K562 (cell line): ENCODE measurements at regions of chr21 and their contacts with region 1.

Region 1: DNA sequence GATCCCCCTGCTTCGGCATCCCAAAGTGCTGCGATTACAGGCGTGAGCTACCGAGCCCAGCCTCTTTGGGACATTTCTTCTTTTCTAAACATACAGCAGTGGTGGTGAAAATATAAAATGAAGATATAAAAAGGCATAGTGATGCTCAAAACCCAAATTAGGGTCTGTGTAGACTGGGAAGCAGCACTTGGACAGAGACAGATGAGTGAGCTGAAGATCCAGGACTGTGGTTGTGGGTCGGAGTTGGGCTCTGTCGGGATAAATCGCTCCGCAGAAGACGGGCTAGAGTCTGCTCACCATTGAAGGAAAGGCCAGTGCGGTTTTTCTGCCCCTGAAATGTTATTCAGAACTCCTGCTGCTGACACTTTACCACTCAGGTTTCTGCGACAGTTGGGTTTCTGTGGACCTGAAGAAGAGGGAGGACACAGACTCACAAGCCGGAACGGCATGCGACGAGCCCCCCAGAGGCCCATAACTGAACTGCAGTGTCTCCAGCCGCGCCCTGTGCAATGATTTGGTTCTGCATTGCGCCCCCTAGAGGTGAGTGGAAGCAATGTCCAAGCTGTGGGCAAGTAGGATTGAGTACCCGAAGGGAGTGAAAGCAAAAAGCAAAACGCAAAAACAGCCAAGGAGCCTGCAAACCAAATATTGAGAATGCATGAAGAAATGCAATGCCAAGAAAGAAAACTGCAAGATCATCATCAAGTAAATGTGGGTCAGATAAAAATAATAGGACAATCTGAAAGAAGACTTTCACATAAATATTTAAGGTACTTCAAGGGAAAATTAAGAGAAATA is 66.6 kb downstream of the GABPA start:
- DNase-seq: peak; percentile 87 to 95 (median 92)
- ATAC-seq: peak; percentile 100
- H3K4me3 ChIP-seq: no peak overlapping the region
- H3K27ac ChIP-seq: no peak overlapping the region
- H3K4me1 ChIP-seq: no peaks in the 10 kb centered on the region; a peak in 1 of 5 replicates
- H3K27me3 ChIP-seq: peaks cover 7 to 14% of the 10 kb centered on the region in 2 experiments; a peak in 3 of 5 replicates
- CTCF ChIP-seq: peak; percentile 100
- EP300 ChIP-seq: no peak
- POLR2A ChIP-seq: no peak
- RAD21 ChIP-seq: peak; percentile 44 to 85; a peak in 3 of 4 replicates

Region 2: GRCh38 chr21:25708467-25709065 is 92.8 kb before region 1 on chr21:
- CTCF ChIA-PET with region 1: interaction called, 5 read pairs
- POLR2A ChIA-PET with region 1: no interaction called
- in situ Hi-C with region 1: no loop called
- intact Hi-C with region 1: loop called (anchors 1 kb)
- DNase-seq: peak; percentile 49 to 60 (median 57)
- ATAC-seq: no peak
- H3K4me3 ChIP-seq: no peak overlapping the region
- H3K27ac ChIP-seq: no peak overlapping the region
- H3K4me1 ChIP-seq: no peaks in the 10 kb centered on the region; a peak in 1 of 5 replicates
- H3K27me3 ChIP-seq: no peaks in the 10 kb centered on the region
- CTCF ChIP-seq: peak; percentile 37 to 77 (median 73); a peak in 4 of 6 replicates
- EP300 ChIP-seq: no peak
- POLR2A ChIP-seq: no peak
- RAD21 ChIP-seq: peak; percentile 15 to 58; a peak in 2 of 4 replicates

Region 3: DNA sequence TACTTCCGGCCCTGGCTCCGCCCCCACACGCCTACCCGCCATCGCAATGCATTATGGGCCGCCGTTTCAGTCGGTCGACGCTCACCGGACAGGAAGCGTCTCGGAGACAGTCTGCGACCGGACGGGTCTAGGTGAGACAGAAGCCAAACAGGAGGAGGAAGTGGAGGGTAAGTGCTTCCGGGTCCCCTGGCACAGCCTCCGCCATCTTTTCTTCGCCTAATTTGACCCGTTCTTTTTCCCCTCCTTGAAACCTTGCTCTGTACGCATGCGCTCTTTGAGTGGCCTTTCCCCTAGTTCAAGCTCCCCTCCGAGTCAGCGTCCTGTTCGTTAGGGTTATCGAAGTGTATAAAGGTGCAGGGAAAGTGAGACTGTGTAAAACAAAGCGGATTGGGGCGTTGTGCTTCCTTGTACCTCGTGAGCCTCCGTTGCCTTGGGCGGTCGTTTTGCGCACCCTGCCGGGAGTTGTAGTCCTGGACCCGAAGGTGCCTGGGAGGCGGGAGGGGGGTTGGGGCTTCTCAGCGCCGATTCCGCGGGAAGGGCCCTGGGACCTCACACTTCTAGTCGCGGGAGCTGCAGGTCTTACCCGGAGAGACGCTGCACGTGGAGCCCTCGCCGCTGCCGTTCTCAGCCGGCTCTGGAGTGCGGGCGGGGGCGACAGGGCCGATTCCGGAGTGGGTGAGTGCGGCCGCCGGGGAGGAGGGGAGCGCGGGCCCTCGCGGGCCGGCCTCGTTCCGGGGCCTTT is 66.3 kb before region 1 on chr21 and contains the starts of genes ATP5PF and GABPA:
- CTCF ChIA-PET with region 1: no interaction called
- POLR2A ChIA-PET with region 1: interaction called, 4 read pairs
- in situ Hi-C with region 1: no loop called
- intact Hi-C with region 1: loop called (anchors 2 kb)
- DNase-seq: peak; percentile 89 to 99 (median 91)
- ATAC-seq: peak; percentile 88
- H3K4me3 ChIP-seq: peak within 1 kb of the TSS; percentile 93
- H3K27ac ChIP-seq: peak within 1 kb of the TSS; percentile 98
- H3K4me1 ChIP-seq: peaks cover 7 to 21% of the 10 kb centered on the region in 2 experiments; a peak in 4 of 5 replicates
- H3K27me3 ChIP-seq: no peaks in the 10 kb centered on the region; a peak in 1 of 5 replicates
- CTCF ChIP-seq: peak in 1 of 3 experiments; percentile 3; a peak in 2 of 6 replicates
- EP300 ChIP-seq: peak; percentile 69
- POLR2A ChIP-seq: peak; percentile 85
- RAD21 ChIP-seq: no peak
- polyA plus RNA-seq, gene ATP5PF: 2,105 to 2,488 TPM
- polyA plus RNA-seq, gene GABPA: 8.9 to 13.2 TPM

Region 4: GRCh38 chr21:25845729-25846256 is 44.4 kb after region 1 on chr21:
- CTCF ChIA-PET with region 1: no interaction called
- POLR2A ChIA-PET with region 1: no interaction called
- in situ Hi-C with region 1: no loop called
- intact Hi-C with region 1: no loop called
- DNase-seq: no peak
- ATAC-seq: no peak
- H3K4me3 ChIP-seq: no peak overlapping the region
- H3K27ac ChIP-seq: no peak overlapping the region
- H3K4me1 ChIP-seq: no peaks in the 10 kb centered on the region
- H3K27me3 ChIP-seq: no peaks in the 10 kb centered on the region
- CTCF ChIP-seq: no peak
- EP300 ChIP-seq: no peak
- POLR2A ChIP-seq: no peak
- RAD21 ChIP-seq: no peak

Region 5: GRCh38 chr21:25862596-25862995 is 61.2 kb after region 1 on chr21:
- CTCF ChIA-PET with region 1: interaction called, 3 read pairs
- POLR2A ChIA-PET with region 1: no interaction called
- in situ Hi-C with region 1: no loop called
- intact Hi-C with region 1: loop called (anchors 5 kb)
- DNase-seq: peak; percentile 40 to 55 (median 48)
- ATAC-seq: peak; percentile 78
- H3K4me3 ChIP-seq: no peak overlapping the region
- H3K27ac ChIP-seq: no peak overlapping the region
- H3K4me1 ChIP-seq: no peaks in the 10 kb centered on the region
- H3K27me3 ChIP-seq: no peaks in the 10 kb centered on the region; a peak in 1 of 5 replicates
- CTCF ChIP-seq: peak; percentile 74 to 86 (median 83)
- EP300 ChIP-seq: no peak
- POLR2A ChIP-seq: no peak
- RAD21 ChIP-seq: peak; percentile 59 to 78